ENCODE measurements at regions of chr12 and their contacts with region 1.

Region 1: DNA sequence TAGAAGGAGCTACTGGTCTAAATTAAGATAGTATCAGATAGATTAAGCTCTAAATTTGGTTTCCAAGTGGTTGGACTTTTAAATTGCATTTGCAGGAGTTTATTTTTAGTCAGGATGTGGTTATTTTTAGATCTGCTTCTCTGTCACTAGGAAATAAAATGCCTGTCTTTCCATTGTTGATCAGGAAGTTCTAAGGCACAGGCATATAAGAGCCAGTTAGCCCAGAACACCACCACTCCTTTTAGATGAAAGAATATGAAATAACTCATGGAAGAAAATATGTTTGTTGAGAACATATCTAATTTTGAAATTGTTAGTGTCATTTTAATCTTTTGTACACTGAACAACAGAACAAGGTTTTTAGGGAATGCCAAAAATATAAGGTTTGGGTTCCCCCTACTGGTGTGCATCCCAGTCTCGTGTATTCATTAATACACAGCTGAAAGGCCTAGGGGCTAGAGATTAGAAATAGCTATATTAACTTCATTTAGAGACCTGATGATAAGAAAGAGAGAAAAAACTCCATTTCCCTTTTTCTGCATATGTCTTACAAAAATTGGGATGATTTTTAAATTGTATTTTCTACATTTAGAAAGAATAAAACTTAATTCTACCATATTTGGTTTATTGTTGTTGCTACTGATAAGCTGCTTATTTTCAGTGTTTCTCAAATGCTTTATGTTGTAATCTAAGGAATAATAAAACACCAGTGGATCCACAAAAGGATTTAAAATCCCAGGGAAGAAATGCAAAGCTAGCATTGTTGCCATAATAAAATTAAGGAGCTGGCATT is 67.2 kb downstream of the RIC8B start:
- DNase-seq: peak; percentile 50 to 59
- ATAC-seq: peak; percentile 81 to 89
- H3K4me3 ChIP-seq: no peak overlapping the region
- H3K27ac ChIP-seq: peak overlapping the region in 1 of 2 experiments; percentile 9; a peak in 3 of 6 replicates
- H3K4me1 ChIP-seq: peaks cover 28% of the 10 kb centered on the region
- CTCF ChIP-seq: peak; percentile 90
- EP300 ChIP-seq: no peak
- POLR2A ChIP-seq: no peak
- RAD21 ChIP-seq: peak; percentile 90 to 92

Region 2: GRCh38 chr12:106195621-106196027 is 646.1 kb before region 1 on chr12:
- CTCF ChIA-PET with region 1: no interaction called
- POLR2A ChIA-PET with region 1: no interaction called
- DNase-seq: no peak
- ATAC-seq: no peak
- H3K4me3 ChIP-seq: no peak overlapping the region
- H3K27ac ChIP-seq: no peak overlapping the region
- H3K4me1 ChIP-seq: no peaks in the 10 kb centered on the region
- CTCF ChIP-seq: no peak
- EP300 ChIP-seq: no peak
- POLR2A ChIP-seq: no peak
- RAD21 ChIP-seq: no peak

Region 3: DNA sequence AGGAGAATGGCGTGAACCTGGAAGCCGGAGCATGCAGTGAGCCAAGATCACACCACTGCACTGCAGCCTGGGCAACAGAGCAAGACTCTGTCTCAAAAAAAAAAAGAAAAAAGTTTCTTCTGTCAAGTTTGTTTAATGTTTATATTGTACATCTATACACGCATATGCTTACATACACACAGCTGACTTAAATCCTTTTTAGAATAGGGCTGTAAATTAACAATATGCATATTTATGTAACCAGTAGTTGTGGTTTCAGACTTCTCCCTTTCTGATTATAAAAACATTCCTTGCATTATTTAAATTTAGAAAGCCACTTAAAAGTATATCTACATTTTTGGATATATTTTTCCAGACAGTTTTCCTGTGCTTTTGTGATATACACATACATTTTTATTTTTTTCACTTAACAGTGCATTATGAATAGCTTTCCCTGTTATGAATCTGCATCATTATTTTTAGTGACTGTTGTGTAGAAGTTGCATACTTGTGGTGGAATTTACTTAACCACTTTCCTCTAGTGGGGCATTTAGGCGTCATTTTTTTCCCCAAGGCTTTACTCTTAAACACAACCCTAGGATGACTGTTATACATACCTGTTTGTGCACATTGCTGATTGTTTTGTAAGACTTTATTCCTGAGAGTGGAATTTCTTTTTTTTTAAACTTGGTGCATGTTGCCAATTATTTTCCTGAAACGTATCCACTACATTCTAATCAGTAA is 454.7 kb before region 1 on chr12:
- CTCF ChIA-PET with region 1: interaction called, 75 read pairs
- POLR2A ChIA-PET with region 1: no interaction called
- DNase-seq: no peak
- ATAC-seq: no peak
- H3K4me3 ChIP-seq: no peak overlapping the region
- H3K27ac ChIP-seq: no peak overlapping the region
- H3K4me1 ChIP-seq: no peaks in the 10 kb centered on the region
- CTCF ChIP-seq: no peak
- EP300 ChIP-seq: no peak
- POLR2A ChIP-seq: no peak
- RAD21 ChIP-seq: no peak

Region 4: GRCh38 chr12:106854723-106855122 is 13.0 kb after region 1 on chr12:
- CTCF ChIA-PET with region 1: interaction called, 10 read pairs
- POLR2A ChIA-PET with region 1: no interaction called
- DNase-seq: no peak
- ATAC-seq: no peak
- H3K4me3 ChIP-seq: no peak overlapping the region
- H3K27ac ChIP-seq: no peak overlapping the region
- H3K4me1 ChIP-seq: no peaks in the 10 kb centered on the region
- CTCF ChIP-seq: no peak
- EP300 ChIP-seq: no peak
- POLR2A ChIP-seq: no peak
- RAD21 ChIP-seq: no peak

Region 5: GRCh38 chr12:106986625-106987430 is 145.1 kb after region 1 on chr12 and contains the start of gene MTERF2:
- CTCF ChIA-PET with region 1: no interaction called
- POLR2A ChIA-PET with region 1: no interaction called
- DNase-seq: peak; percentile 96
- ATAC-seq: peak; percentile 98
- H3K4me3 ChIP-seq: peak within 1 kb of the TSS; percentile 50
- H3K27ac ChIP-seq: peak within 1 kb of the TSS; percentile 67 to 93
- H3K4me1 ChIP-seq: peaks cover 13% of the 10 kb centered on the region; the same call in 2 of the 3 replicates
- CTCF ChIP-seq: no peak
- EP300 ChIP-seq: no peak
- POLR2A ChIP-seq: peak; percentile 70
- RAD21 ChIP-seq: no peak
- polyA plus RNA-seq, gene MTERF2: 10.6 and 13.9 TPM in 2 replicates